B cell (primary cell): ENCODE measurements at regions of chr5 and their contacts with region 1.

Region 1: GRCh38 chr5:117454716-117455596 is 880.3 kb upstream of the SEMA6A start:
- DNase-seq: peak; percentile 63
- ATAC-seq: peak; percentile 79
- H3K4me3 ChIP-seq: peak overlapping the region in 3 of 5 experiments; percentile 6 to 29 (median 9)
- H3K4me3 Mint-ChIP-seq: peak overlapping the region; percentile 64
- H3K27ac ChIP-seq: no peak overlapping the region
- H3K27ac Mint-ChIP-seq: no peak overlapping the region
- H3K4me1 ChIP-seq: peaks cover 5 to 10% of the 10 kb centered on the region in 2 donors
- H3K4me1 Mint-ChIP-seq: peaks cover 7% of the 10 kb centered on the region
- H3K27me3 ChIP-seq: peaks cover 0 to 9% (median 4%) of the 10 kb centered on the region in 4 experiments
- H3K27me3 Mint-ChIP-seq: peaks cover 9% of the 10 kb centered on the region
- CTCF ChIP-seq: peak; percentile 93

Region 2: DNA sequence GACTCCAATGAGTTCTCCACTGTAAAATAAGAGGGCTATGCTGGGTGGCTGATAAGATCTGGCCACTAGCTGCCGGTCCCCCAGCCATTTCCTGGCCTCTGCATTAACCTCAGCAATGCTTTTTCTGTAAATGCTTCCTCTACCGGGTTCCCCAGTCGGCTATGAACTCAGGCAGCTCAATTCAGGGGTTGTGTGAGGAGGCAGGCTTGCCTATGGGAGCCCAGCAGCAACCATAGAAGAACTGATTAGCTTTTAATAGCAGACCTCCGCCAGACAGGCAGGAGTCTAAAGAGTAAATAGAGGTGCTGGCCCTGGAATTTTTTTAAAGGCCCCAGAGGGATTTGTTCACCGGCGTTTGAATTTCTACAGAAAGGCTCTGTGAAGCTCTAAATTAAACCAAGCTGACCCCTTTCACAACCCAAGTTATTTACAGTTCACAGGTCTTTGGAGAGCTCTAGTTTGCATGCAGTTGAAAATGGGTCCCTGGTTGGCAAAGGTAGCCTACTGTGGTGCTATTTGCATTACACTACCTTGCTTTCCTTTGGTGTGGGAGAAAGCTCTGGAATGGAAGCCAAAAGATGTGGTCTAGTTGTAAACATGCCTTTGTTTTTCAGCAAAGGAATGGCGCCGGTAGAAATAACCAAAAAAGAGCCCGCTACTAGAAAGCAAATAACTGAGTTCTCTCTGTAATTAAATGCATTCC is 590.7 kb before region 1 on chr5:
- CTCF ChIA-PET with region 1: no interaction called
- POLR2A ChIA-PET with region 1: no interaction called
- intact Hi-C with region 1: no loop called
- DNase-seq: no peak
- ATAC-seq: no peak
- H3K4me3 ChIP-seq: no peak overlapping the region
- H3K4me3 Mint-ChIP-seq: no peak overlapping the region
- H3K27ac ChIP-seq: no peak overlapping the region
- H3K27ac Mint-ChIP-seq: no peak overlapping the region
- H3K4me1 ChIP-seq: no peaks in the 10 kb centered on the region
- H3K4me1 Mint-ChIP-seq: no peaks in the 10 kb centered on the region
- H3K27me3 ChIP-seq: no peaks in the 10 kb centered on the region
- H3K27me3 Mint-ChIP-seq: peaks cover 4% of the 10 kb centered on the region
- CTCF ChIP-seq: no peak

Region 3: GRCh38 chr5:118791926-118792734 is 1337.2 kb after region 1 on chr5:
- CTCF ChIA-PET with region 1: interaction called, 27 read pairs
- POLR2A ChIA-PET with region 1: no interaction called
- intact Hi-C with region 1: no loop called
- DNase-seq: peak; percentile 48
- ATAC-seq: peak; percentile 39
- H3K4me3 ChIP-seq: no peak overlapping the region
- H3K4me3 Mint-ChIP-seq: no peak overlapping the region
- H3K27ac ChIP-seq: no peak overlapping the region
- H3K27ac Mint-ChIP-seq: no peak overlapping the region
- H3K4me1 ChIP-seq: no peaks in the 10 kb centered on the region
- H3K4me1 Mint-ChIP-seq: no peaks in the 10 kb centered on the region
- H3K27me3 ChIP-seq: no peaks in the 10 kb centered on the region
- H3K27me3 Mint-ChIP-seq: peaks cover 6% of the 10 kb centered on the region
- CTCF ChIP-seq: peak; percentile 76

Region 4: DNA sequence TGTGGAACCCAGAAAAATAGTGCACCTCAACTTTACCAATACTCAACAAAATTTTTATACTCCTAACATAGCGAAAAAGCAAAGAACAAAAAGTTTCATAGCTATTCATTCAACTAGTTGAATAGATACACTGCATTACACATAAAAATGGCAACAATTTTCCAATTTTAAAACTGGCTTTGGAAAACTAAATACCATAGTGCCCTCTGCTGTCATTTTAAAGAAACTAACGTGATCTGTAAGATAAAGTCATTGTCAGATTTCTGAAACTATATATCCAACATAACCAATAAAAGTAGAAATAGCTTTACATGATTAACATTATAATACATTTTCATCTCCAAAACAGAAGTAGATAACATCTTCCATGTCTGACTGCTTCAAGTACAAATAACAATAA is 1501.8 kb after region 1 on chr5:
- CTCF ChIA-PET with region 1: interaction called, 5 read pairs
- POLR2A ChIA-PET with region 1: no interaction called
- intact Hi-C with region 1: loop called (anchors 10 kb)
- DNase-seq: no peak
- ATAC-seq: no peak
- H3K4me3 ChIP-seq: no peak overlapping the region
- H3K4me3 Mint-ChIP-seq: no peak overlapping the region
- H3K27ac ChIP-seq: no peak overlapping the region
- H3K27ac Mint-ChIP-seq: no peak overlapping the region
- H3K4me1 ChIP-seq: peaks cover 0 to 3% of the 10 kb centered on the region in 2 donors
- H3K4me1 Mint-ChIP-seq: peaks cover 4% of the 10 kb centered on the region
- H3K27me3 ChIP-seq: no peaks in the 10 kb centered on the region
- H3K27me3 Mint-ChIP-seq: no peaks in the 10 kb centered on the region
- CTCF ChIP-seq: no peak